K562 (cell line): ENCODE measurements at regions of chr1 and their contacts with region 1.

Region 1: DNA sequence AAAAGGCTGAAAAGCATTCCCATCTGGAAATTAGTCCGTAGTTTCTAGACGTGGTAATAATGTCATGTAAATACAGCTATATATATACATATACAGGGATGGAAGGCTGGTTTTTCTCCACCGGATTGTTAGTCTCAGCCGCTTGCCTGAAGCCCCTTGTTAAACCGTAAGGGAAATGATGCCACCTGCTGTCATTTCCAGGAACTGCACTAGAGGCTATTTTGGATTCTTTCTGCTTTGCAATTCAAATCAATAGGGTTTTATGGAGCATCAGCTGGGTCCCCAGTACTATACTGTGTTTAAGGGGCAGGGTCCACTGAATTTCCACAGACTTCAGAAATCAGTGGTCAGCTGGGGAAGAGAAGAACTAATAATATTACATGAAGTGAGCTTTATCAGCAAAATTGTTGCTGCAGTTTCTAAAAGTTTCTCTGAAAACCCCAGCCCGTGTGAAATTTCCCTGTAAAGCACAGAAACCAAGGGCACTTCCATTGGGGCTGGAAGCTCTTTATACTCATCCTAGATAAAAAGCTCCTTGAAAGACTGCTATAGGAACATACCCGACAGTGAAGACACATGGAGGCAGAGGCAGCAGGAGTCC is 33.8 kb upstream of the MPZL1 start:
- DNase-seq: peak; percentile 80 to 89 (median 82)
- ATAC-seq: peak; percentile 88
- H3K4me3 ChIP-seq: no peak overlapping the region
- H3K27ac ChIP-seq: peak overlapping the region; percentile 46; the same call in 2 of the 3 replicates
- H3K4me1 ChIP-seq: peaks cover 9 to 15% of the 10 kb centered on the region in 2 experiments; a peak in 4 of 5 replicates
- H3K27me3 ChIP-seq: no peaks in the 10 kb centered on the region
- CTCF ChIP-seq: peak; percentile 89 to 98 (median 94)
- EP300 ChIP-seq: no peak; the same call in 1 of the 2 replicates
- POLR2A ChIP-seq: no peak
- RAD21 ChIP-seq: peak; percentile 96 to 98

Region 2: DNA sequence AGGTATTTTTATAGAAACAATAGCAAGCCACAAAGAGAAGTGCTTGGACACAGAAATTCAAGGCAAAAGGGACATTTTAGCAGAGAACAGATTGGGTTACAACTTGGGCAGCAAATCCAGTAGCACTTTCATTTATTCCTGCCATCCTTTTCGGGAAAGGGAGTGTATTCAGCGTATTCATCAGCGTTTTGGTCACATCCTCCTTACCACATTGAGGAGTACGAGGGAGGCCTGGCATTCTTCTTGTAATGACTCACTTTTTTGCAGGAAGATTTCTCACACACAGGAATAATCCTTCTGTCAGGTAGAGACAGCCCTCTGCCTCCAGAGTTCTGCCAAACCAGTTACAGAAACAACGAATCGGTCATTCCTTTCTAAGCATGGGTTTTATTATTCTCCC is 1503.1 kb before region 1 on chr1:
- CTCF ChIA-PET with region 1: no interaction called
- POLR2A ChIA-PET with region 1: no interaction called
- in situ Hi-C with region 1: loop called (anchors 25 kb)
- intact Hi-C with region 1: no loop called
- DNase-seq: no peak
- ATAC-seq: no peak
- H3K4me3 ChIP-seq: no peak overlapping the region
- H3K27ac ChIP-seq: no peak overlapping the region
- H3K4me1 ChIP-seq: no peaks in the 10 kb centered on the region; a peak in 1 of 5 replicates
- H3K27me3 ChIP-seq: peaks cover 0 to 2% of the 10 kb centered on the region in 2 experiments; a peak in 2 of 5 replicates
- CTCF ChIP-seq: no peak
- EP300 ChIP-seq: no peak
- POLR2A ChIP-seq: no peak
- RAD21 ChIP-seq: no peak

Region 3: DNA sequence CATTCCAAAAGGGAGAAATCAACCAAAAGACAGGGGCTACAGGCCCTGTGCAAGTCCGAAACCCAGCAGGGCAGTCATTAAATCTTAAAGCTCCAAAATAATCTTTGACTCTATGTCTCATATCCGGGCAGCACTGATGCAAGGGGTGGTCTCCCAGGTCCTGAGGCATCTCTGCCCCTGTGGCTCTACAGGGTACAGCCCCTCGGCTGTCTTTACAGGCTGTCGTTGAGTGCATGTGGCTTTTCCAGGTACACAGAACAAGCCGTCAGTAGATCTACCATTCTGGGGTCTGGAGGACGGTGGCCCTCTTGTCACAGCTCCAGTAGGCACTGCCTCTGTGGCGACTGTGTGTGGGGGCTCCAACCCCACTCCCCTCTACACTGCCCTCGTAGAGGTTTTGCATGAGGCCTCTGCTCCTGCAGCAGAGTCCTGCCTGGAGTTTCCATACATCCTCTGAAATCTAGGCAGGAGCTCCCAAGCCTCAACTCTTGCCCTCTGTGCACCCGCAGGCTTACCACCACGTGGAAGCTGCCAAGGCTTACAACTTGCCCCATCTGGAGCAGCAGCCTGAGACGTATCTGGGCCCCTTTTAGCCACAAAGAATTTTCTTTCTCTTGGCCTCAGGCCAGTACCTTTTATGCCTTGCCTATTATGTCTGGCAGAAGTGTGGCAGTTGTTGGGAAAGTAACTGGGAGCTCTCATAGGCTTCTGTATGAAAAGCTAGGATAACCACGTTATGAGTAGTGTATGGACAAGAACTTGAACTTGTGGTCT is 414.8 kb before region 1 on chr1:
- CTCF ChIA-PET with region 1: no interaction called
- POLR2A ChIA-PET with region 1: no interaction called
- in situ Hi-C with region 1: no loop called
- intact Hi-C with region 1: loop called (anchors 5 kb)
- DNase-seq: no peak
- ATAC-seq: peak; percentile 62
- H3K4me3 ChIP-seq: no peak overlapping the region
- H3K27ac ChIP-seq: no peak overlapping the region
- H3K4me1 ChIP-seq: peaks cover 4% of the 10 kb centered on the region in 2 experiments; a peak in 1 of 5 replicates
- H3K27me3 ChIP-seq: no peaks in the 10 kb centered on the region
- CTCF ChIP-seq: no peak
- EP300 ChIP-seq: no peak
- POLR2A ChIP-seq: no peak
- RAD21 ChIP-seq: no peak

Region 4: DNA sequence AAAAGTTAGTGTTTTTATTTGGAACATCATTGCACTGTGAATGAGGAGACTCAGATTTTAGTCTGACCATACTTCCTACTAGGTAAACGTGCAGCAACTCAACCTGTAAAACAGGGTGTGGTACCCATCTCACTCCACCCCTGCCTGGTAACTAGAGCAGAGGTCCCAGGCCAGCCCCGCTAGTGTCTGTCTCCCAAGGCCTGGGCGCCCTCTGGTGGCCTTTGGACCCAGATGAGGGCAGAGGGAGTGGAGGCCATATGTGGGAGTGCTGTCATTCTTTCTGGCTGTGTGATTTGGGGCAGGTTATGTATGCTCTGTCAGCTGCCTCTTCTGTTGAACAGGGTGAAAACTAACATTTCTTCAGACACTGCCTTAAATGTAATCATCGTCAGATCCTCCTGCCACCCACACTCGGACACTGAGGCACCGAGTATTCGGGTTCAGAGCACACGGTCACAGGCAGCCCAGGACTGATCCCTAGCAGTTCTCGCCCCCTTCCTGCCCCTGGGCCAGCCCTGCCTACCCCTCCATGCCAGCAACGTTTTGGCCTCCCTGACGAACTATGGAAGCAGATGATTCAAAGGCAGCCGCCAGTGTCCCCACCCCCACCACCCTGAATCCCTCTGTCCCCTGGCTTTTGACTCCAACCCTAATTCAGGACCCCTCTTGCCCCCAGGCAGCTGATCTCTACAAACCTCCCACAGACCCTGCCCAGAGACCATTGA is 245.7 kb before region 1 on chr1:
- CTCF ChIA-PET with region 1: interaction called, 3 read pairs
- POLR2A ChIA-PET with region 1: no interaction called
- in situ Hi-C with region 1: no loop called
- intact Hi-C with region 1: loop called (anchors 10 kb)
- DNase-seq: peak; percentile 91 to 94 (median 92)
- ATAC-seq: peak; percentile 98
- H3K4me3 ChIP-seq: no peak overlapping the region
- H3K27ac ChIP-seq: no peak overlapping the region
- H3K4me1 ChIP-seq: peaks cover 2 to 13% of the 10 kb centered on the region in 2 experiments; a peak in 3 of 5 replicates
- H3K27me3 ChIP-seq: peaks cover 10 to 37% of the 10 kb centered on the region in 2 experiments
- CTCF ChIP-seq: peak; percentile 96 to 98 (median 97)
- EP300 ChIP-seq: no peak
- POLR2A ChIP-seq: no peak
- RAD21 ChIP-seq: peak; percentile 99 to 100

Region 5: DNA sequence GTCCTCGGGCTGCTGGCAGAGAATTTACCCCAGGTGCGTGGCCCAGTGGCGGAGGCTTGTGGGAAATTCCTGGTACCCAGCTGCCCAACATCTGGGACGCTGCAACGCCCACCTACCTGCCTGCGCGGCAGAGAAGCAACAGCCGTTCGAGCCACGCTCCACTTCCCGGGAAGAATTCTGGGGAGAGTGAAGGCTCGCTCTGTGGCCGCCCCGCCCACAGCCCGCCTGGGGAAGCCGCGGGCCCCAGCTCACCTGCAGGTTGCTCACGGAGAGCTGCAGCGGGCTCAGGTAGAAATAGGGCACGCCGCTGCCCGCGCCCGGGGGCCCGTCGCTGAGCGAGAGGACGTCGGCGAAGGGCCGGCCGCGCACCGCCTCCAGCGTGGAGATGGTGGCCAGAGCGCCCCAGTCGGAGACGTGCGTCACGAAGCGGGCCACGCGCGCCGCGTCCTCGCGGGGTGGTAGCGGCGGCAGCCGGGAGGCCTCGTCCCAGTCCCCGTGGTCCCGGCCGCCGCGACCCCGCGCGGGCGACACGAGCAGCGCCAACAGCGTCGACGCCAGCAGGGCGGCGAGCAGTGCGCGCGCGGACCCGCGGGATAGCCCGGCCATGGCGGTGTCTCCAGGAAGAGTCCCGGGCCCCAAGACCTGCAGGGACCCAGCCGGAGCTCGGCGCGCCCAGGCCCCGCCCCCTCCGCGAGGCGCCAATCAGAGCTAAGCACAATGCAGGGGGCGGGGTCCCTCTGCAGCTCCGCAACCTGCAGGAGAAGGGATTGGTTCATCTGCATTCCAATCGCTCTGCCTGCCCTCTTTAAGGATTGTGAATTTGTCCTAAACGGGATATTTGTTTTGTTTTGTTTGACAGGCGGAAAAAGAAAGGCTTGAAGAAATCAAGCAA is 134.6 kb before region 1 on chr1 and contains the start of gene CREG1:
- CTCF ChIA-PET with region 1: interaction called, 7 read pairs
- POLR2A ChIA-PET with region 1: interaction called, 7 read pairs
- in situ Hi-C with region 1: no loop called
- intact Hi-C with region 1: loop called (anchors 1 kb)
- DNase-seq: peak; percentile 98 to 99 (median 98)
- ATAC-seq: peak; percentile 93
- H3K4me3 ChIP-seq: peak within 1 kb of the TSS; percentile 73
- H3K27ac ChIP-seq: peak within 1 kb of the TSS; percentile 70
- H3K4me1 ChIP-seq: peaks cover 23 to 45% of the 10 kb centered on the region in 2 experiments
- H3K27me3 ChIP-seq: no peaks in the 10 kb centered on the region
- CTCF ChIP-seq: peak in 2 of 3 experiments; percentile 24 to 41; a peak in 2 of 6 replicates
- EP300 ChIP-seq: 0 out of 2 replicates have a peak, but pooled peaks have one; percentile 9
- POLR2A ChIP-seq: peak; percentile 82
- RAD21 ChIP-seq: peak in 1 of 2 experiments; percentile 12; a peak in 1 of 4 replicates
- polyA plus RNA-seq, gene CREG1: 45.7 to 58.2 TPM

Region 6: GRCh38 chr1:167627865-167628641 is 60.0 kb before region 1 on chr1:
- CTCF ChIA-PET with region 1: no interaction called
- POLR2A ChIA-PET with region 1: no interaction called
- in situ Hi-C with region 1: no loop called
- intact Hi-C with region 1: loop called (anchors 2 kb)
- DNase-seq: peak; percentile 92 to 98 (median 92)
- ATAC-seq: peak; percentile 80
- H3K4me3 ChIP-seq: peak overlapping the region; percentile 77
- H3K27ac ChIP-seq: peak overlapping the region; percentile 97
- H3K4me1 ChIP-seq: peaks cover 36 to 55% of the 10 kb centered on the region in 2 experiments
- H3K27me3 ChIP-seq: no peaks in the 10 kb centered on the region
- CTCF ChIP-seq: no peak
- EP300 ChIP-seq: peak; percentile 98
- POLR2A ChIP-seq: peak; percentile 96
- RAD21 ChIP-seq: peak in 1 of 2 experiments; percentile 19; a peak in 2 of 4 replicates